Gastrocnemius medialis (tissue), 4 donors: ENCODE measurements at regions of chr16 and their contacts with region 1.

Region 1: DNA sequence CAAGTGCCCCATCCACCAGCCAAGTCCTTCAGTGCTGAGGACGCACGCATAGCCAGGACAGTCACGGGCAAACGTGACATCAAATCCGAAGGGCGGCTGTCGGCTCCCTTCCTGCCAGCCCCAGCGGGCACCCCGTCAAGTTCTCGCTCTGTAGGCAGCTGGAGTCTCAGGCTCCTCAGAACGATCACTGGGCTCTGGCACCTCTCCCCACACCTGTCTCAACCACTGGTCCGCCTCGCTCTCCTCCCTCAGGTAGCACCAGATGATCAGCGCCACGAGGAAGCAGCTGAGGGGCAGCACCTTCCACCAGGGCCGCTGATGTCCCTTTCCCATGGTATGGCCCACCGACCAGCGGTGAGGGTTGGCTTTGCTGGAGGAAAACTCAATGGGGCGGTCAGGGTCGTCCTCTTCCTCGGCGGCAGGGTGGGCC is 421 bp downstream of the UQCC4 start:
- DNase-seq: peak in 1 of 2 donors; percentile 71
- ATAC-seq: peak; percentile 17 to 20
- H3K4me3 ChIP-seq: peak overlapping the region; percentile 95 to 99 (median 96)
- H3K27ac ChIP-seq: peak overlapping the region; percentile 85 to 99 (median 90)
- H3K4me1 ChIP-seq: peaks cover 25 to 38% of the 10 kb centered on the region in 2 donors
- H3K27me3 ChIP-seq: no peaks in the 10 kb centered on the region
- CTCF ChIP-seq: no peak
- POLR2A ChIP-seq: no peak

Region 2: GRCh38 chr16:1378804-1379303 is 41.3 kb before region 1 on chr16:
- in situ Hi-C with region 1: no loop called
- intact Hi-C with region 1: loop called (anchors 2 kb)
- DNase-seq: peak; percentile 87 to 96
- ATAC-seq: peak; percentile 83
- H3K4me3 ChIP-seq: peak overlapping the region; percentile 64 to 77 (median 70)
- H3K27ac ChIP-seq: peak overlapping the region; percentile 95 to 98 (median 98)
- H3K4me1 ChIP-seq: peaks cover 10 to 20% of the 10 kb centered on the region in 2 donors
- H3K27me3 ChIP-seq: no peaks in the 10 kb centered on the region
- CTCF ChIP-seq: no peak
- POLR2A ChIP-seq: no peak

Region 3: GRCh38 chr16:1474796-1475551 is 54.8 kb after region 1 on chr16 and contains the start of gene CLCN7:
- in situ Hi-C with region 1: no loop called
- intact Hi-C with region 1: loop called (anchors 2 kb)
- DNase-seq: peak; percentile 86 to 91
- ATAC-seq: peak; percentile 93 to 97
- H3K4me3 ChIP-seq: peak within 1 kb of the TSS; percentile 80 to 100 (median 86)
- H3K27ac ChIP-seq: peak within 1 kb of the TSS; percentile 90 to 98 (median 94)
- H3K4me1 ChIP-seq: peaks cover 14 to 27% of the 10 kb centered on the region in 2 donors
- H3K27me3 ChIP-seq: no peaks in the 10 kb centered on the region
- CTCF ChIP-seq: peak in 2 of 5 experiments; percentile 21 to 56
- POLR2A ChIP-seq: peak; percentile 95 to 97
- total RNA-seq, gene CLCN7: 24.8 to 45.8 (median 38.4) TPM

Region 4: DNA sequence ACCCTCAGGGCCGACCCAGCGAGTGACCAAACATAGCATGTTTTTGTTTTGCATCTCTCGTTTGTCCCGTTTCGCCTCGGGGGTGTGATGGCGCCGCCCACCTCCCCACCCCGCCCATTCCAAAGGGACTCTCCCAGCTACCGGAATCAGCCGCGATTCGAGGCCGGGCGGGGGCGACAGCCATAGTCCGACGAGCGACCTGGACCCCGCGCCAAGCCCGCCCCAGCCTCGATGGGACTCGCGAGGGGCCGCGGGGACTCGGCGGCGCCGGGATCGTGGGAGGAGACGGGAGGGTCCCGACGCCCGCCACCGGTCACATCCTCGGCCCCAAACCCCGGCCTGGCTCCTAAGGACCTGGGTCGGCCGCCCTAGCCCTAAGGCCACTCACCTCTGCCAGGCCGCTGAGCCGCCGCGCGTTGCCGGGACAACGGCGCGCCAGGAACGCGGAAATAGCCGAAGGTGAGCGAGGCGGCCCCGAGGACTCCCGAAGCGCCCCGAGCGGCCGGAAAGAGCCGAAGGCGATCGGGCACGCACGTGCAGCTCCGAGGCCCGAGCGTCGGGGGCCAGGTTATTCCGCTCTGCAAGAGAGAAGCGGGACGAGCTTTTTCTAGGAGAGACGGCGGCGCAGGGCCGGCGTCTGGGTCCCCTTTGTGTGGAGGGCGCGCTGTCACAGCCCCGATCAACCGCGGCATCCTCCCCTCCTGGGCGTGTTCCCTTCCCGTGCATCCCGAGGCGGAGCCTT is 190.3 kb after region 1 on chr16:
- in situ Hi-C with region 1: no loop called
- intact Hi-C with region 1: loop called (anchors 2 kb)
- DNase-seq: peak; percentile 76 to 81
- ATAC-seq: peak; percentile 61 to 67
- H3K4me3 ChIP-seq: peak overlapping the region; percentile 69 to 91 (median 80)
- H3K27ac ChIP-seq: peak overlapping the region; percentile 78 to 94 (median 86)
- H3K4me1 ChIP-seq: peaks cover 30 to 33% of the 10 kb centered on the region in 2 donors
- H3K27me3 ChIP-seq: no peaks in the 10 kb centered on the region
- CTCF ChIP-seq: no peak
- POLR2A ChIP-seq: no peak

Region 5: GRCh38 chr16:1782352-1783091 is 362.4 kb after region 1 on chr16 and contains the starts of genes NUBP2 and SPSB3:
- in situ Hi-C with region 1: no loop called
- intact Hi-C with region 1: loop called (anchors 1 kb)
- DNase-seq: peak; percentile 100
- ATAC-seq: peak; percentile 97 to 98
- H3K4me3 ChIP-seq: peak within 1 kb of the TSS; percentile 67 to 93 (median 78)
- H3K27ac ChIP-seq: peak within 1 kb of the TSS; percentile 77 to 92 (median 86)
- H3K4me1 ChIP-seq: peaks cover 30 to 38% of the 10 kb centered on the region in 2 donors
- H3K27me3 ChIP-seq: no peaks in the 10 kb centered on the region
- CTCF ChIP-seq: no peak
- POLR2A ChIP-seq: peak; percentile 76 to 93
- total RNA-seq, gene NUBP2: 77.3 to 163 (median 80.7) TPM
- total RNA-seq, gene SPSB3: 86.2 to 161 (median 88.3) TPM